ENCODE measurements at regions of chr9 and their contacts with region 1.

Region 1: GRCh38 chr9:78566948-78567684 is 270.2 kb downstream of the PSAT1 start:
- DNase-seq: no peak
- H3K4me3 ChIP-seq: no peak overlapping the region
- H3K27ac ChIP-seq: no peak overlapping the region
- H3K4me1 ChIP-seq: no peaks in the 10 kb centered on the region
- H3K27me3 ChIP-seq: no peaks in the 10 kb centered on the region
- CTCF ChIP-seq: no peak
- POLR2A ChIP-seq: no peak

Region 2: GRCh38 chr9:78314953-78315870 is 251.9 kb before region 1 on chr9:
- intact Hi-C with region 1: no loop called
- DNase-seq: no peak
- H3K4me3 ChIP-seq: no peak overlapping the region
- H3K27ac ChIP-seq: no peak overlapping the region
- H3K4me1 ChIP-seq: no peaks in the 10 kb centered on the region
- H3K27me3 ChIP-seq: no peaks in the 10 kb centered on the region
- CTCF ChIP-seq: no peak
- POLR2A ChIP-seq: no peak

Region 3: DNA sequence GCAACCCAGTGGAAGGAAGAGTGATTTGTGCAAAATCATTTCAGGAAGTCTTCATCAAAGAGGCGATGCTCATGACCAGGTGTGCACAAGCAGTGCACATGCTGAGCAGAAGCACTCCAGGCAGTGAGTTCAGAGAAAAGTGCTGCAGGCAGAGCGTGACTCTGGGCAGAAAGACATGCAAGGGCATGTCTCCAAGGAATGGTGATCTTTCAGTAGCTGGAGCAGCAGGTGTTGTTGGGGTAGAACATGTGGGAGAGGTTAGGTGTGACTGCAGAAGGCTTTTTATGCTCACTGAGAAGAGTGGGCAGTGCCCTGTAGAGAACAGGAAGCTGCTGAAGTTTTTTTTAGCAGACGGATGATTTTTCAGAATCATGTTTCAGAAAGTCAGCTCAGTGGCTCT is 459.2 kb after region 1 on chr9:
- intact Hi-C with region 1: no loop called
- DNase-seq: no peak
- H3K4me3 ChIP-seq: no peak overlapping the region
- H3K27ac ChIP-seq: no peak overlapping the region
- H3K4me1 ChIP-seq: no peaks in the 10 kb centered on the region
- H3K27me3 ChIP-seq: no peaks in the 10 kb centered on the region
- CTCF ChIP-seq: no peak
- POLR2A ChIP-seq: no peak

Region 4: GRCh38 chr9:79104216-79104615 is 537.1 kb after region 1 on chr9:
- intact Hi-C with region 1: loop called (anchors 10 kb)
- DNase-seq: no peak
- H3K4me3 ChIP-seq: no peak overlapping the region
- H3K27ac ChIP-seq: no peak overlapping the region
- H3K4me1 ChIP-seq: no peaks in the 10 kb centered on the region
- H3K27me3 ChIP-seq: no peaks in the 10 kb centered on the region
- CTCF ChIP-seq: no peak
- POLR2A ChIP-seq: no peak